ENCODE measurements at regions of chr11 and their contacts with region 1.

Region 1: DNA sequence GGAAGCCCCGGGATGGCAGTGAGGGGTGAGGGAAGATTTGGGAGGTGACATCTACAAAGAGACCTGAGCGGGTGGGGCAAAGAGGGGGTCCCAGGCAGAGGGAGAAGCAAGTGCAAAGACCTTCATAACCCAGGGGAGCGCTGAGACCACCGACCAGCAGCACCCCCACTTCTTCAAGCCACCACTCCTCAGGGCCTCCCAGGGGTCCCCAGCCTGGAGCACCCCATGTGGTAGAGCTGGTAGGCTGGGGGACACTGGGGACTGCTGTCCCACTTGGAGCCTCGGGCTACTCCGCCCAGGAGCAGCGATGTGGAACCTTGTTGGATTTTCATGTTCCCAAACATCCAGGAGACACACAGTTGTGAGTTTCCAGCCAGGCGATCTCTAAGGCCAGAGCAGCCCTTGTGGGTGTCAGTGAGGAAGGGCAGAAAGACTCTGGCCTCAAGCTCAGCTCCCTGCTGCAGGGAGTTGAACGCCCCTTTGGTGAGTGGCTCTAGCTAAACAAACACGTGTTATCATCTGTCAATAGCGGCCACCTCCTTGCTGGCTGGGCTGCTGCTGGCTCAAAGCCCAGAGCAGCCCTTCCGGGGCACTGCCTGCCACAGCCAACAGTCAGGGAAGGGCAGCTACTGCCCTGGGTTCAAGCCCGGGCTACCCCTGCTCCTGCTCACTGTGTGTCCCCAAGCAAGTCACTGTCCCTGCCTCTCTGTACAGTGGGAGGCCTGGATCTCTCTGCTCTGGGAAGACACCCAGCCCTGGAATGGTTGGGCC is 25.7 kb upstream of the CHKA start:
- DNase-seq: peak; percentile 76 to 96
- H3K4me3 ChIP-seq: no peak overlapping the region
- H3K27ac ChIP-seq: peak overlapping the region; percentile 91
- H3K4me1 ChIP-seq: peaks cover 74% of the 10 kb centered on the region
- H3K27me3 ChIP-seq: no peaks in the 10 kb centered on the region
- CTCF ChIP-seq: no peak

Region 2: GRCh38 chr11:68066742-68067141 is 80.1 kb before region 1 on chr11:
- CTCF ChIA-PET with region 1: no interaction called
- POLR2A ChIA-PET with region 1: interaction called, 10 read pairs
- intact Hi-C with region 1: no loop called
- DNase-seq: no peak
- H3K4me3 ChIP-seq: no peak overlapping the region
- H3K27ac ChIP-seq: no peak overlapping the region
- H3K4me1 ChIP-seq: no peaks in the 10 kb centered on the region
- H3K27me3 ChIP-seq: no peaks in the 10 kb centered on the region
- CTCF ChIP-seq: no peak

Region 3: GRCh38 chr11:68099474-68100405 is 47.1 kb before region 1 on chr11:
- CTCF ChIA-PET with region 1: no interaction called
- POLR2A ChIA-PET with region 1: interaction called, 3 read pairs
- intact Hi-C with region 1: loop called (anchors 10 kb)
- DNase-seq: no peak
- H3K4me3 ChIP-seq: no peak overlapping the region
- H3K27ac ChIP-seq: peak overlapping the region; percentile 39
- H3K4me1 ChIP-seq: peaks cover 18% of the 10 kb centered on the region
- H3K27me3 ChIP-seq: no peaks in the 10 kb centered on the region
- CTCF ChIP-seq: no peak

Region 4: GRCh38 chr11:68121067-68121899 is 25.6 kb before region 1 on chr11 and contains the start of gene CHKA:
- CTCF ChIA-PET with region 1: no interaction called
- POLR2A ChIA-PET with region 1: interaction called, 8 read pairs
- intact Hi-C with region 1: loop called (anchors 1 kb)
- DNase-seq: peak; percentile 88 to 97
- H3K4me3 ChIP-seq: peak within 1 kb of the TSS; percentile 92
- H3K27ac ChIP-seq: peak within 1 kb of the TSS; percentile 97
- H3K4me1 ChIP-seq: peaks cover 77% of the 10 kb centered on the region
- H3K27me3 ChIP-seq: no peaks in the 10 kb centered on the region
- CTCF ChIP-seq: no peak
- total RNA-seq, gene CHKA: 84.2 and 90.5 TPM in 2 replicates

Region 5: GRCh38 chr11:68127714-68128681 is 18.9 kb before region 1 on chr11:
- CTCF ChIA-PET with region 1: interaction called, 3 read pairs
- POLR2A ChIA-PET with region 1: interaction called, 68 read pairs
- intact Hi-C with region 1: loop called (anchors 1 kb)
- DNase-seq: peak; percentile 86 to 95
- H3K4me3 ChIP-seq: peak overlapping the region; percentile 57
- H3K27ac ChIP-seq: peak overlapping the region; percentile 97
- H3K4me1 ChIP-seq: peaks cover 81% of the 10 kb centered on the region
- H3K27me3 ChIP-seq: no peaks in the 10 kb centered on the region
- CTCF ChIP-seq: no peak

Region 6: DNA sequence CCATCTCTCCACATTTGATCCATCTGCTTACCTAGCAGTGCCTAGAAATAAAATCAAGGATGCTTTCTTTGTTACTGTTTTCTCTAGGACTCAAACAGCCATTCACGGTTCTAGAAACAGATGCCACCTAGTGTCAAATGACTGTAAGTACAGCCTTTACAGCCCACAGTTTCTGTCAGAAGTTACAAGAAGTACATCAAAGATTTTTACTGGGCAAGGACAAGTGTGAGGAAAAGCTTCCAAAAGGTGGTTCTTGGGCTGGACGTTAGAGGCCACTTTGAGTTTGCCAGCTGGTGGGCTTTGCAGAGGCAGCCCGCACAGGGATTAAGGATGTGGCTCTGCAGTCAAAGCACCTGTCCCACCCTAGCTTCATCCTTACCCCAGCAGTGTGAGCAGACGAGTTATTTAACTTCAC is 59.3 kb after region 1 on chr11:
- CTCF ChIA-PET with region 1: no interaction called
- POLR2A ChIA-PET with region 1: interaction called, 8 read pairs
- intact Hi-C with region 1: loop called (anchors 2 kb)
- DNase-seq: peak; percentile 34 to 69
- H3K4me3 ChIP-seq: no peak overlapping the region
- H3K27ac ChIP-seq: no peak overlapping the region
- H3K4me1 ChIP-seq: peaks cover 24% of the 10 kb centered on the region
- H3K27me3 ChIP-seq: no peaks in the 10 kb centered on the region
- CTCF ChIP-seq: peak; percentile 94

Measured in PC-9 (cell line).